ENCODE measurements at regions of chr15 and their contacts with region 1.

Region 1: GRCh38 chr15:73051811-73052678 is at the start of gene NEO1:
- DNase-seq: peak; percentile 88
- ATAC-seq: peak; percentile 97
- total RNA-seq, gene NEO1: 13.4 TPM

Region 2: DNA sequence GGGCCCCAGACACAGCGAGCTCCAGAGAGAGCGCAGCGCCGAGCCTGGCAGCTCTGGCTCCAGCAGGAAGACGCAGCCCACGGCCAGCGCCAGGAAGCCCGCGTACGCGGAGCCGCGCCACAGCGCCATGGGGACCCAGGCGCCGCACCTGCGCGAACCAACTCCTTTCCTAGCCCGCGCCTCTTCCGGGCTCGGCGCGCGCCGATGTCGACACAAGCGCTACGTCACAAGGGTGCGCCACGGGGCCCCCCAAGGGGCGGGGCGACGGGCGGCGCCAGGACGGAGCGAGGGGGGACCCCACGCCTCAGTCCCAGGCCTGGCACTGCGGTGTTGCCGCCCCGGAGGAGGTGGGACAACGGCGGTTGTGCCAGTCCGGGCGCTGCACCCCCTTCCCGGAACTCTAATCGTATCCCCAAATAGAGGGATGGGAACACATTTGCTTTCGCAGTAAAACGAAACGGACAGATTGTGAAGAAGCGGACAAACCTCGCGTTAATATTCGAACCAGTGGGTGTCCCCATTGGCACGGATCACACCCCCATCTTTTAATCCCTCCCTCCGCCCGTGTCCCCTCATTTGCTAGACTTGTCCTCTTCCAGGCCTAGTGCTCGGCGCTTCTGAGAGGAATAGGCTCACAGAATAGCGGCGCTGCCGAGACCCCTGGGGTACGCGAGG is 268.3 kb before region 1 on chr15 and contains the start of gene ADPGK:
- intact Hi-C with region 1: loop called (anchors 5 kb)
- DNase-seq: peak; percentile 95
- ATAC-seq: peak; percentile 97
- total RNA-seq, gene ADPGK: 11.4 TPM

Measured in Right ventricle myocardium inferior (tissue), 1 donor.